Naive thymus-derived CD4-positive, alpha-beta T cell (primary cell): ENCODE measurements at regions of chr14 and their contacts with region 1.

Region 1: GRCh38 chr14:95993768-95994592 is 45.2 kb upstream of the C14orf132 start:
- DNase-seq: peak in 7 of 9 donors; percentile 5 to 45 (median 37)
- ATAC-seq: no peak
- H3K4me3 ChIP-seq: no peak overlapping the region
- H3K4me3 Mint-ChIP-seq: no peak overlapping the region
- H3K27ac ChIP-seq: no peak overlapping the region
- H3K27ac Mint-ChIP-seq: no peak overlapping the region
- H3K4me1 ChIP-seq: no peaks in the 10 kb centered on the region
- H3K4me1 Mint-ChIP-seq: no peaks in the 10 kb centered on the region
- H3K27me3 ChIP-seq: no peaks in the 10 kb centered on the region
- H3K27me3 Mint-ChIP-seq: peaks cover 17 to 70% (median 55%) of the 10 kb centered on the region in 5 donors

Region 2: DNA sequence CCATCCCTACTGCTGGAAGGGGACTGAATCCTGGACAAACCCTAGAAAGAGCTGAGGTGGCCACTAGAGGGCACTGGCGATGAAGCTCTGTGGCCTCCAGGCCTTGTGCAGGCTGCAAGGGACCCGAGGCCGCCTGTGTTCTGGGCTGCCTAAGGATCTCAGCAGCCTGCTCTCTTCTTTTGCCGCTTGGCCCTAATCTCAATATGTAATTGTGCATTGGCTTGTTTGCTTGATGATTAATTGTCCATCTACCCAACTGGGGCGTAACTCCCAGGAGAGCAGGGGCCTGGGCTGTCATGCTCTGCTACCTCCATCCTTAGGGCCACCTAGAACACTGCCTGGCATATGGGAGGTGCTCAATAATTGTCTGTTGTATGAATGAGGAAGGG is 551.4 kb before region 1 on chr14:
- CTCF ChIA-PET with region 1: no interaction called
- POLR2A ChIA-PET with region 1: no interaction called
- intact Hi-C with region 1: loop called in 1 of 2 experiments (anchors 5 kb)
- DNase-seq: peak; percentile 51 to 76 (median 68)
- ATAC-seq: peak; percentile 94
- H3K4me3 ChIP-seq: no peak overlapping the region
- H3K4me3 Mint-ChIP-seq: no peak overlapping the region
- H3K27ac ChIP-seq: no peak overlapping the region
- H3K27ac Mint-ChIP-seq: peak overlapping the region; percentile 3 to 77 (median 57)
- H3K4me1 ChIP-seq: no peaks in the 10 kb centered on the region
- H3K4me1 Mint-ChIP-seq: peaks cover 4 to 15% (median 5%) of the 10 kb centered on the region in 7 donors
- H3K27me3 ChIP-seq: no peaks in the 10 kb centered on the region
- H3K27me3 Mint-ChIP-seq: no peaks in the 10 kb centered on the region

Region 3: GRCh38 chr14:95774265-95775160 is 219.5 kb before region 1 on chr14:
- CTCF ChIA-PET with region 1: no interaction called
- POLR2A ChIA-PET with region 1: no interaction called
- intact Hi-C with region 1: no loop called
- DNase-seq: peak in 8 of 9 donors; percentile 4 to 46 (median 34)
- ATAC-seq: peak; percentile 65
- H3K4me3 ChIP-seq: no peak overlapping the region
- H3K4me3 Mint-ChIP-seq: no peak overlapping the region
- H3K27ac ChIP-seq: no peak overlapping the region
- H3K27ac Mint-ChIP-seq: peak overlapping the region in 1 of 9 donors; percentile 6
- H3K4me1 ChIP-seq: no peaks in the 10 kb centered on the region
- H3K4me1 Mint-ChIP-seq: peaks cover 0 to 6% (median 4%) of the 10 kb centered on the region in 7 donors
- H3K27me3 ChIP-seq: no peaks in the 10 kb centered on the region
- H3K27me3 Mint-ChIP-seq: peaks cover 5 to 10% (median 6%) of the 10 kb centered on the region in 5 donors

Region 4: GRCh38 chr14:95857275-95857674 is 136.7 kb before region 1 on chr14:
- CTCF ChIA-PET with region 1: no interaction called
- POLR2A ChIA-PET with region 1: no interaction called
- intact Hi-C with region 1: no loop called
- DNase-seq: no peak
- ATAC-seq: no peak
- H3K4me3 ChIP-seq: no peak overlapping the region
- H3K4me3 Mint-ChIP-seq: no peak overlapping the region
- H3K27ac ChIP-seq: no peak overlapping the region
- H3K27ac Mint-ChIP-seq: no peak overlapping the region
- H3K4me1 ChIP-seq: no peaks in the 10 kb centered on the region
- H3K4me1 Mint-ChIP-seq: no peaks in the 10 kb centered on the region
- H3K27me3 ChIP-seq: no peaks in the 10 kb centered on the region
- H3K27me3 Mint-ChIP-seq: peaks cover 4 to 40% (median 26%) of the 10 kb centered on the region in 5 donors

Region 5: GRCh38 chr14:95895720-95896119 is 98.3 kb before region 1 on chr14:
- CTCF ChIA-PET with region 1: interaction called, 7 read pairs
- POLR2A ChIA-PET with region 1: no interaction called
- intact Hi-C with region 1: loop called in 1 of 2 experiments (anchors 1 kb)
- DNase-seq: peak in 3 of 9 donors; percentile 4 to 14 (median 8)
- ATAC-seq: no peak
- H3K4me3 ChIP-seq: no peak overlapping the region
- H3K4me3 Mint-ChIP-seq: no peak overlapping the region
- H3K27ac ChIP-seq: no peak overlapping the region
- H3K27ac Mint-ChIP-seq: no peak overlapping the region
- H3K4me1 ChIP-seq: no peaks in the 10 kb centered on the region
- H3K4me1 Mint-ChIP-seq: no peaks in the 10 kb centered on the region
- H3K27me3 ChIP-seq: no peaks in the 10 kb centered on the region
- H3K27me3 Mint-ChIP-seq: peaks cover 0 to 74% (median 32%) of the 10 kb centered on the region in 5 donors

Region 6: GRCh38 chr14:96051642-96052540 is 57.9 kb after region 1 on chr14:
- CTCF ChIA-PET with region 1: interaction called, 7 read pairs
- POLR2A ChIA-PET with region 1: no interaction called
- intact Hi-C with region 1: loop called in 1 of 2 experiments (anchors 1 kb)
- DNase-seq: peak in 4 of 9 donors; percentile 7 to 29 (median 20)
- ATAC-seq: no peak
- H3K4me3 ChIP-seq: no peak overlapping the region
- H3K4me3 Mint-ChIP-seq: no peak overlapping the region
- H3K27ac ChIP-seq: no peak overlapping the region
- H3K27ac Mint-ChIP-seq: no peak overlapping the region
- H3K4me1 ChIP-seq: no peaks in the 10 kb centered on the region
- H3K4me1 Mint-ChIP-seq: peaks cover 0 to 7% (median 0%) of the 10 kb centered on the region in 7 donors
- H3K27me3 ChIP-seq: no peaks in the 10 kb centered on the region
- H3K27me3 Mint-ChIP-seq: peaks cover 0 to 9% (median 6%) of the 10 kb centered on the region in 5 donors

Region 7: DNA sequence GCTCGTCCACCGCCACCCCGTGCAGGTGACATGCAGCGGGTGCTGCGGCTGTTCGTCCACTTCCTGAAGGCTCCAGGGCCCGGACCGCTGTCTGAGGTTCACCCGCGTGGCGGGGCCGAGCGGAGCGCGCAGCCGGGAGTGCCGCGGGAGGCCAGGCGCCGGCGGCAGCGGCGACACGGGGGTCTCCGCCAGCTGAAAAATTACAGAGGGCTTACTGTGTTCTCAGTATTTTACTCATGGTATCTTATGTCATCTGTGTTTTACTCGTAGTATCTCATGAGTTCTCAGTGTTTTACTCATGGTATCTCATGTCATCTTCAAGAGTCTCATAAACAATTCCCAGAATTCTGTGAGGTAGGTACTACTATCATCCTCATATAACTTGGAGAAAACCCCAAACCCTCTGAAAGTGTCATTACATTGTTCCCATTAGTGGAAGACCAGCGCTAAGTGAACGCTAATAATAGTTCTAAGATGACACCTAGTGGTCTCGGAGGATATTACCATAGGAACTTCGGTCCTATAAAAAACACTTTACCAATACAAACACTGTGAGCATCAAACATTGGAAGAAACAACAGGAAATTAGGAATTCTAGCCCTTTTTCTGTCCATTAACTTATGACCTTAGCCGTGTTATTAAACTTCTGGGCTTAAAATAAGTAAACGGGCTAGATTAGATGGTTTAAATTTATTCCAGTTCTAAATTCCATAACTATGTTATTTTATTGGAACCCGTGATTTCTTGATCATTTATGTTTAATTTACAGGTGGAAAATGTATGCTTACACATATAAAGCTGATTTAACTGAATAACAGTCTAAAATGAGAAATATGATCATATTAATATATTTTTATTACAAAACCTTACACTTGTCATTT is 430.4 kb after region 1 on chr14:
- CTCF ChIA-PET with region 1: no interaction called
- POLR2A ChIA-PET with region 1: no interaction called
- intact Hi-C with region 1: loop called in 1 of 2 experiments (anchors 1 kb)
- DNase-seq: peak in 8 of 9 donors; percentile 17 to 58 (median 50)
- ATAC-seq: peak; percentile 88
- H3K4me3 ChIP-seq: peak overlapping the region; percentile 49
- H3K4me3 Mint-ChIP-seq: peak overlapping the region; percentile 60 to 84 (median 82)
- H3K27ac ChIP-seq: no peak overlapping the region
- H3K27ac Mint-ChIP-seq: peak overlapping the region in 1 of 9 donors; percentile 41
- H3K4me1 ChIP-seq: no peaks in the 10 kb centered on the region
- H3K4me1 Mint-ChIP-seq: peaks cover 0 to 5% (median 3%) of the 10 kb centered on the region in 7 donors
- H3K27me3 ChIP-seq: no peaks in the 10 kb centered on the region
- H3K27me3 Mint-ChIP-seq: peaks cover 0 to 10% (median 3%) of the 10 kb centered on the region in 5 donors